Dorsolateral prefrontal cortex (tissue), 120 donors: ENCODE measurements at regions of chr10 and their contacts with region 1.

Region 1: DNA sequence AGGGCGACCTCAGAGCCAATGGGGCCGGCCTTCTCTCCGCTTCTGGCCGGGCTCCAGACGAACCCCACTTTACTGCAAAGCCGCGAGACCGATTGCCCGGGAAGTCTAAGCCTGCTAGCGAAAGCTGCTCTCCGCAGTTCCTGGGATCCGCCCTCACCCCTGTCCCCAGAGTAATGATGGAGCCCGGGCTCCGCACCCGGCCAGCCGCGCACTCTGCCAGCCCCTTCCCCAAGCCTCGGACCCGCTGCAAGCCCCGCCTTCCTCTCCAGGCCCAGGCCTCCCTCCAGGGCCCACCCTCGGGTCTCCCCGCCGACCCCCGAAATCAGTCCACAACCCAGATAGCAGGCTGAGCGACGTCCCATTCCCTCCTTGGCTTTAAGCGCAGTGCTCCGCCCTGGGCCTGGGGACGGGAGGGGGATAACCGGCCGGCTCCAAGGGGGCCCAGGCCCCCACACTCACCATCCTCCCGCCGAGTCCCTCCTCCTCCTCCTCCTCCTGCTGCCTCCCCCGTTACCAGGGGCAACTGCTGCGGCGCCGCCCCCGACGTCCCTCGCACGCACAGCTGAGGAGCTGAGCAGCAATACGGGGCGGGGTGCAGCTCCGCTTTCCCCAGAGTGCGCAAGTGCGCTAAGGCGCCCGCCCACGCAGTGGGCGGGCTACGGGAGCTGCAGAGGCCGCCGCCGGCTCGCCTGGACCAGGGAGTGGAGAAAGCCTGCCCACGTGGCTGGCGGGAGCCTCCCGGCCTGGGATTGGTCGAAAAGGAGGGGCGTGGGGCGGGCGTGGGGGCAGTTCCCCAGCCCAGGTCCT is at the start of gene ARL3:
- DNase-seq: peak; percentile 96 to 99 (median 98)
- H3K4me3 ChIP-seq: peak within 1 kb of the TSS; percentile 73 to 100 (median 95)
- H3K27ac ChIP-seq: peak within 1 kb of the TSS in 58 of 59 donors; percentile 56 to 95 (median 88)
- H3K27me3 ChIP-seq: no peaks in the 10 kb centered on the region
- CTCF ChIP-seq: peak in 29 of 56 donors; percentile 3 to 55 (median 23)
- total RNA-seq, gene ARL3: 16.6 to 45.7 (median 35.4) TPM

Region 2: GRCh38 chr10:102641880-102642735 is 71.9 kb before region 1 on chr10:
- intact Hi-C with region 1: loop called in 1 of 2 experiments (anchors 1 kb)
- DNase-seq: peak; percentile 95 to 99 (median 98)
- H3K4me3 ChIP-seq: peak overlapping the region; percentile 63 to 99 (median 88)
- H3K27ac ChIP-seq: peak overlapping the region; percentile 94 to 100 (median 99)
- H3K27me3 ChIP-seq: no peaks in the 10 kb centered on the region
- CTCF ChIP-seq: peak in 22 of 56 donors; percentile 1 to 48 (median 24)

Region 3: DNA sequence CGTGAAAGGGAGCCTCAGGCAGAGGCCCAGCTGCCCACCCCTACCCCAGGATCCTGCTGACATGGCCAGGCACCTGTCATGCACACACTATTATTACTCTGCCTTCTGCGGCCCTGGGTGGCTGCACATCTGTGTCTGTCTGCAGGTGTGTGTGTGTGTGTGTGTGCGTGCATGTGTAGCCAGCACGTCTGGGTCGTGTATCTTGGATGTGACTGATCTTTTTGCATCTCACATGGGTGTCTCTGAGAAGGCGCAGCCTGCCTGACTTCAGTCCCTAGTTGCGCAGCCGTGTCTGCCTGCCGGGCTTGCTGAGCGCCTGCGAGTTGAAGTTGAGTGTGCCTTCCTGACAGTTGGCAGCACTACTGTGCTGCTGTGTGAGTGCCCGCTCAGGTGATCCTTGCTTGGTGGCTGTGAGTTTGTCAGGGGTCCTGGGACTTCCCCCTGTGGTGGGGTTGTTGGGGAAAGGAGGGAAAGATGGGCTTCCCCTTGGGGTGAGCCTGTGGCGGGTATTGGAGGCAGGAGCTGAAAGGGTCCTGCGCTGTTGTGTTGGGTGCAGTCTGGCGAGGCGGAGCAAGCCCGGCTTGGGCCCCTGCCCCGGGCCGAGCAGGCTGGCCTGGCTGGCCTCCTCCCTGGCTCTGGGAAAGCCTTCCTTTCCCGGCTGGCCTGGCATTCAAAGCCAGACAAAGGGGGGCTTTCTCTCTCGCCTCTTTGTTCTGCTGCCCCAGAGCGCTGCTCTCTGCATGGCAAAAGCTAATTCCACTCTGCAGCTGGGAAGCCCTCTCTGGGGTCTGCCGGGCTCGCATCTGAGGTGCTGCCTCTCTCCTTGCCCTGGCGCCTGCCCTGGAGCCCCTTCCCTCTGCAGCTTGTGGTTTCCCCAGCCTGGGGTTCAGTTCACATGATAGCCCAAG is 64.9 kb before region 1 on chr10:
- intact Hi-C with region 1: loop called in 1 of 2 experiments (anchors 2 kb)
- DNase-seq: peak in 9 of 10 donors; percentile 51 to 85 (median 74)
- H3K4me3 ChIP-seq: peak overlapping the region; percentile 28 to 96 (median 87)
- H3K27ac ChIP-seq: peak overlapping the region; percentile 11 to 100 (median 99)
- H3K27me3 ChIP-seq: no peaks in the 10 kb centered on the region
- CTCF ChIP-seq: peak in 3 of 56 donors; percentile 13 to 38 (median 31)

Region 4: GRCh38 chr10:102678842-102679289 is 35.2 kb before region 1 on chr10:
- intact Hi-C with region 1: loop called (anchors 2 to 5 kb)
- DNase-seq: peak in 9 of 10 donors; percentile 68 to 85 (median 73)
- H3K4me3 ChIP-seq: peak overlapping the region in 40 of 59 donors; percentile 2 to 54 (median 34)
- H3K27ac ChIP-seq: peak overlapping the region; percentile 54 to 96 (median 86)
- H3K27me3 ChIP-seq: no peaks in the 10 kb centered on the region
- CTCF ChIP-seq: peak; percentile 29 to 85 (median 71)

Region 5: GRCh38 chr10:103507235-103508191 is 793.5 kb after region 1 on chr10:
- intact Hi-C with region 1: no loop called
- DNase-seq: no peak
- H3K4me3 ChIP-seq: no peak overlapping the region
- H3K27ac ChIP-seq: no peak overlapping the region
- H3K27me3 ChIP-seq: no peaks in the 10 kb centered on the region
- CTCF ChIP-seq: no peak